Endothelial cell of umbilical vein (primary cell): ENCODE measurements at regions of chr20 and their contacts with region 1.

Region 1: GRCh38 chr20:9609887-9610502 is 95.6 kb downstream of the LAMP5 start:
- DNase-seq: peak; percentile 82
- H3K4me3 ChIP-seq: no peak overlapping the region
- H3K27ac ChIP-seq: no peak overlapping the region
- H3K4me1 ChIP-seq: no peaks in the 10 kb centered on the region
- H3K27me3 ChIP-seq: peaks cover 2 to 4% of the 10 kb centered on the region in 2 experiments
- CTCF ChIP-seq: peak; percentile 44 to 54
- POLR2A ChIP-seq: no peak

Region 2: DNA sequence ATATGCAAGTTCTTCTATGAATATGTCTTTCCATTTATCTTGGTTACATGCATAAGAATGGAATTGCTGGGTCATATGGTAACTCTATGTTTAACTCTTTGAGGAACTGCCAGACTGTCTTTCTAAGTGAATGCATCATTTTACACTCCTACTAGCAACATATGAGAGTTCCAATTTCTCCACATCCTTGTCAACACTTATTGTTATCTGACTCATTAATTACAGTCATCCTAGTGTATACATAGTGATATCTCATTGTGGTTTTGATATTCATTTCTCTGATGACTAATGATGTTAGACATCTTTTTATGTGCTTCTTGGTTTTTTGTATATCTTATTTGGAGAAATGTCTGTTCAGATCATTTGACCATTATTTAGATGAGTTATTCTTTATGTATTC is 192.3 kb before region 1 on chr20:
- CTCF ChIA-PET with region 1: interaction called, 26 read pairs
- POLR2A ChIA-PET with region 1: no interaction called
- dilution Hi-C with region 1: no loop called
- intact Hi-C with region 1: no loop called
- DNase-seq: no peak
- H3K4me3 ChIP-seq: no peak overlapping the region
- H3K27ac ChIP-seq: no peak overlapping the region
- H3K4me1 ChIP-seq: no peaks in the 10 kb centered on the region
- H3K27me3 ChIP-seq: no peaks in the 10 kb centered on the region
- CTCF ChIP-seq: no peak
- POLR2A ChIP-seq: no peak

Region 3: GRCh38 chr20:9424551-9424950 is 185.4 kb before region 1 on chr20:
- CTCF ChIA-PET with region 1: interaction called, 26 read pairs
- POLR2A ChIA-PET with region 1: no interaction called
- dilution Hi-C with region 1: no loop called
- intact Hi-C with region 1: no loop called
- DNase-seq: no peak
- H3K4me3 ChIP-seq: no peak overlapping the region
- H3K27ac ChIP-seq: no peak overlapping the region
- H3K4me1 ChIP-seq: no peaks in the 10 kb centered on the region
- H3K27me3 ChIP-seq: no peaks in the 10 kb centered on the region
- CTCF ChIP-seq: no peak
- POLR2A ChIP-seq: no peak

Region 4: DNA sequence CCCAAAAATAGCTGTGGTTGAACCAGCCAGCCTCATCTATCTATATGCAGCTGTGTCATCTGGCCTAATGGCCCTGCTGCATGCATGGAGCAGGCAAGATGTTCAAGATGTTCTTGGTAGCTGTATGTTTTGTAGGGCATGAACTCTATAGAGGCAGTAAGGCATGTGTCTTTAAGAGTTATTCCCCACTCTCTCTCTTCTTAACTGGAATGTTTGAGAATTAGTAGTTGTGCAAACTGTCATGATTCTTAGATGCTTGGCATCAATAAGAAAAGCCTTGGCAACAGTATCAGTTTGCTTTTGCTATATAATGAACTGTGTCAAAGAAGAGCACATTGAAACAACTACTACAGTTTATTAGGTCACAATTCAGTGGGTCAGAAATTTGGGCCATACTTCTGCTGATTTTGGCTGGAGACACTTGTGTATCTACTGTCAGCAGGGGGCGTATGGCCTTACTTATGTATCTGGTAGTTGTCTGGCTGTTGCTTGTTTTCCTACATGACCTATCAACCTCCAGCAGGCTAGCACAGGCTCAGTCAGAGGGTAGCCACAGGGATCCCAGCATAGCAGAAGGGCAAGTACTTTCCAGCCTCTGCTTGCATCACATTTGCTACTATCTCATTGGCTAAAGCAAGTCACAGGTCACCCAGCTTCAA is 151.7 kb before region 1 on chr20:
- CTCF ChIA-PET with region 1: interaction called, 64 read pairs
- POLR2A ChIA-PET with region 1: no interaction called
- dilution Hi-C with region 1: no loop called
- intact Hi-C with region 1: loop called (anchors 1 kb)
- DNase-seq: no peak
- H3K4me3 ChIP-seq: no peak overlapping the region
- H3K27ac ChIP-seq: no peak overlapping the region
- H3K4me1 ChIP-seq: peaks cover 13% of the 10 kb centered on the region
- H3K27me3 ChIP-seq: no peaks in the 10 kb centered on the region
- CTCF ChIP-seq: peak; percentile 22 to 36
- POLR2A ChIP-seq: no peak

Region 5: DNA sequence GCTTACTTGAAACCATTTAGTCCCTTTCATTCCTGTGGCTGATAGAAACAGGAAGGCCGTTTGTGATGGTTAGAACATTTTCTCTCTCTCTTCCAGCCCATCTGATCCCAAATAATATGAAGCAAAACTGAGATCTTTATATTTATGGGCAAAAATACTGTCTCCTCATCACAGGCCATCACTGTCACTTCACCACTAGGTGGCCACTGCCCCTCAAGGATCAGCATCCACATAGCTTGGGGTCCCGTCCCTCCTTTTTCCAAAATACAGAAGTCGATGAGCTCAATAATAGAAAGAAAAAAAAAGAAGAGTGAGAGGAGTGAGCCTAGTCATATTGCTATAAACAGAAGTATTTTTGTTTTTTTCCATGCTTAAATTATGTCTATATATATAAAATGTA is 142.0 kb before region 1 on chr20:
- CTCF ChIA-PET with region 1: interaction called, 16 read pairs
- POLR2A ChIA-PET with region 1: no interaction called
- dilution Hi-C with region 1: no loop called
- intact Hi-C with region 1: loop called (anchors 1 kb)
- DNase-seq: no peak
- H3K4me3 ChIP-seq: no peak overlapping the region
- H3K27ac ChIP-seq: no peak overlapping the region
- H3K4me1 ChIP-seq: no peaks in the 10 kb centered on the region
- H3K27me3 ChIP-seq: no peaks in the 10 kb centered on the region
- CTCF ChIP-seq: peak; percentile 48 to 52
- POLR2A ChIP-seq: no peak

Region 6: DNA sequence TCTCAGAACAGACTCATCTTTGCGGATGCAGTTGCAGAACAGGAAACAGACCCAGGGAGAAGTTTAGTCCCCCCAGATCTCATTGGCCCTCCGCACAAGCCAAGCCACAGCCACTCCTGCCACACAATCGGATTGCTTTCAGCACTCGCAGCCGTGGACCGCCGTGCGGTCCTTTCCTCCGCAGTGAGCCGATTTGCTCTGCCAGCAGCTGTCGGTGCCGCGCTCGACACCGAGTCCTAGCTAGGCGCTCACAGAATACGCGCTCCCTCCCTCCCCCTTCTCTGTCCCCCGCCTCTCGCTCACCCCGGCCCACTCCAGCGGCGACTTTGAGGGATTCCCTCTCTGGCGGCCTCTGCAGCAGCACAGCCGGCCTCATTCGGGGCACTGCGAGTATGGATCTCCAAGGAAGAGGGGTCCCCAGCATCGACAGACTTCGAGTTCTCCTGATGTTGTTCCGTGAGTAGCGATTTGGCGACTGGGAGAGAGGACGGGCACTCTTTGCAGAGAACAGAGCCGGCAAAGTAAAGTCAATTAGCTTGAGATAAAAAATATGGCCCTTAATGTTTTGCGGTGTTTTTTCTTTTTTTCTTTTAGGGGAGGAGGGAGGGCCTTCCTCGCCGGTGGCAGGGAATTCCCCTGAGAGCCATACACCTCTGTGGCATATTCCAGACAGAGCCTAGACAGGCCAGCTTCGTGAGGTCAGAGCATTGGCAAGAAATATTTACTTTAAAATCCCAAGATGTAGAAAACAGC is 95.4 kb before region 1 on chr20 and contains the start of gene LAMP5:
- CTCF ChIA-PET with region 1: interaction called, 12 read pairs
- POLR2A ChIA-PET with region 1: no interaction called
- dilution Hi-C with region 1: no loop called
- intact Hi-C with region 1: no loop called
- DNase-seq: peak; percentile 18
- H3K4me3 ChIP-seq: no peak within 1 kb of the TSS
- H3K27ac ChIP-seq: no peak within 1 kb of the TSS
- H3K4me1 ChIP-seq: peaks cover 5% of the 10 kb centered on the region
- H3K27me3 ChIP-seq: peaks cover 64 to 97% of the 10 kb centered on the region in 2 experiments
- CTCF ChIP-seq: no peak
- POLR2A ChIP-seq: no peak
- total RNA-seq, gene LAMP5: not detected in 2 replicates

Region 7: GRCh38 chr20:9590189-9590588 is 19.8 kb before region 1 on chr20:
- CTCF ChIA-PET with region 1: interaction called, 34 read pairs
- POLR2A ChIA-PET with region 1: no interaction called
- dilution Hi-C with region 1: no loop called
- intact Hi-C with region 1: no loop called
- DNase-seq: peak; percentile 60
- H3K4me3 ChIP-seq: no peak overlapping the region
- H3K27ac ChIP-seq: no peak overlapping the region
- H3K4me1 ChIP-seq: peaks cover 22% of the 10 kb centered on the region
- H3K27me3 ChIP-seq: no peaks in the 10 kb centered on the region
- CTCF ChIP-seq: no peak
- POLR2A ChIP-seq: no peak

Region 8: DNA sequence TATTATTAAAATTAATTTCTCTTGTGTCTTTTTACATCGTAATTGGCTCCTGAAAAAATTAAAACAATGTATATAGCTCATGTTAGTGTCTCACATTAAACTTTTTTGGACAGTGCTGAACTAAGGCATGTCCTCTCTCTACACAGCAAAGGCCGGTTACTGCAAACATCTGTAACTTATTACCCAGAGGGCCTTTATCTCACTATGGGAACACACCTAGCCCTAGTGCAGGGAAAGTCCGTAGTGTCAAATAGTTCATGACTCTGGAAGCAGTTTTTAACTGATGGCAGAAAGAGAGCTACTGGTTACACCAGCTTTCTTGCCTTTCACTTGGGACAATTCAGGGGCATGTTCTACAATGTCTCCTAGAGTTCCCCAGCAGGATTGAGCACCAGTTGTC is 146.7 kb after region 1 on chr20:
- CTCF ChIA-PET with region 1: no interaction called
- POLR2A ChIA-PET with region 1: no interaction called
- dilution Hi-C with region 1: no loop called
- intact Hi-C with region 1: no loop called
- DNase-seq: no peak
- H3K4me3 ChIP-seq: no peak overlapping the region
- H3K27ac ChIP-seq: no peak overlapping the region
- H3K4me1 ChIP-seq: no peaks in the 10 kb centered on the region
- H3K27me3 ChIP-seq: no peaks in the 10 kb centered on the region
- CTCF ChIP-seq: no peak
- POLR2A ChIP-seq: no peak